Activated CD4-positive, alpha-beta memory T cell treated with anti-CD3 and anti-CD28 coated beads for 36 hours (primary cell): ENCODE measurements at regions of chr17 and their contacts with region 1.

Region 1: GRCh38 chr17:47970704-47971463 is at the start of gene CDK5RAP3:
- DNase-seq: peak; percentile 100
- H3K4me3 Mint-ChIP-seq: peak within 1 kb of the TSS; percentile 88
- H3K27ac Mint-ChIP-seq: peak within 1 kb of the TSS; percentile 85
- H3K4me1 Mint-ChIP-seq: peaks cover 22% of the 10 kb centered on the region
- H3K27me3 Mint-ChIP-seq: no peaks in the 10 kb centered on the region
- total RNA-seq, gene CDK5RAP3: 170 to 183 TPM

Region 2: DNA sequence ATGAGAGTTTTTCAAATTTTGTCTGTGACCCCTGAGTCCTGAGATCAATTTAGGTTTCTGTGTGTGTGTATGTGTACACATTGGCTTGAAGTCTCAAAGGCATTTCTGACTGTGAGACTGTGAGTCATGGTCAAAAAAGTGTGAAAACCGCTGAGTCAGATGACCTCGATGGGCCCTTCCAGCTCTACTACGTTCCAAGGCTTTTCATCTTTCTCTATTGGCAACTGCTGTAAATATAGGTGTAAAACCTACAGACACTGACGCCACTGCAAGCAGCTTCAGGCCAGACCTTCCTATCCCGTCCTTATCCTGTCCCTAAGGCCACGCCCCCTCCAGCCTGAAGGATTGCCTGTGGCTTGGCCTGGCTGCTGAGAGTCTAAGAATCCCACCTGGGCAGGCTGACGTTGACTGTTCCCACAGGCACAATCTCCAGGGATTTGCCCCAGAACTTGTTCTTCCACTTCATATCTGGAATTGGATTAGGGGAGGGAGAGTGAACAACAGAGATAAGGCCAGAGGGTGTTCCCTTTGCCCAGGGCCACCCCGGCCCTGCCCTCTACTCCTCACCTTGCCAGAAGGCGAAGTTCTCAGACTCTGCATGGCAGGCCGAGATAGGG is 160.6 kb before region 1 on chr17:
- CTCF ChIA-PET with region 1: no interaction called
- POLR2A ChIA-PET with region 1: no interaction called
- intact Hi-C with region 1: no loop called
- DNase-seq: peak; percentile 74
- H3K4me3 Mint-ChIP-seq: no peak overlapping the region
- H3K27ac Mint-ChIP-seq: peak overlapping the region; percentile 62
- H3K4me1 Mint-ChIP-seq: peaks cover 9% of the 10 kb centered on the region
- H3K27me3 Mint-ChIP-seq: no peaks in the 10 kb centered on the region

Region 3: DNA sequence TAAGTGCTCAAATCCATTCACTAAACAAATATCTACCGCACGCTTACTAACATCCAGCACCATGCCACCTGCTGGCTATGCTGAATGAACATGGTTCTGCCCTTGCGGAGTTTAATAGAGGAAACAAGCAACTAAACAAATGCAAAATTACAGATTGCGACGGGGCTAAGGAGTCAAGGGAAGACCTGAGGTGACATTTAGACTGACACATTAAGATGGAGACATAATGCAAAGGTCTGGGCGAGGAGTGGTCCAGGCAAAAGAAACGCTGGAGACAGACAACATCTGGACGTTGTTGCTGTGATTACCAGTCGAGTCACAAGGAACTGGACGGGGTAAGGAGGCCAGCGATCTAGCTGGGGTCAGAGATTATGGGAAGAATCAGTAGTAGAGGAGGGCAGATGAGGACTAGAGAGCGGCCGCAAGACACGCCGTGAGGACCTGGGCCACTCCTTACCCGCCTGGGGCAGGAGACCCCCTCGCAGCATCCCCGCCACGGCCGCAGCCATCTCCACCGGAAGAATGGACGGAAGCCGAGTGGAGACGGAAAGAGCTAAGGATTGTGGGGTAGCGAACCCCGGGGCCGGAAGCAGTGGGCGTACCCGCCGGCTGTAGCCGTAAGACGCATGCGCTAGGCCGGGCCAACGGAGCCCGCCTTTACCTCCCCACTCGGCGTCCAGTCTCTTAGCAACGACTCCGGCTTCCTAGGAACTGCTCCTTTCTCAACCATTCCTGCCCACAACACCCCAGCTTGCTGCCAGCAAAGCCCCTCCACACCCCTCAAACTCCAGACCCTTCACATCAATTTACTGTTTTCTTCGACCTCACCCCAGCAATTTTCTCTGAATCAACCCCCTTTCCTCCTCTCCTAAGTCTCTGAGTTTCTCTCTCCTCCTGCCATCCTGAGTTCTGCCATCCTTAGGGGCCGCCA is 139.6 kb before region 1 on chr17 and contains the starts of genes LRRC46 and MRPL10:
- CTCF ChIA-PET with region 1: interaction called, 11 read pairs
- POLR2A ChIA-PET with region 1: no interaction called
- intact Hi-C with region 1: no loop called
- DNase-seq: peak; percentile 96
- H3K4me3 Mint-ChIP-seq: peak within 1 kb of the TSS; percentile 85
- H3K27ac Mint-ChIP-seq: peak within 1 kb of the TSS; percentile 81
- H3K4me1 Mint-ChIP-seq: peaks cover 50% of the 10 kb centered on the region
- H3K27me3 Mint-ChIP-seq: no peaks in the 10 kb centered on the region
- total RNA-seq, gene LRRC46: 0.29 to 0.59 TPM
- total RNA-seq, gene MRPL10: 69.9 to 72.4 TPM

Region 4: GRCh38 chr17:47895856-47896671 is 74.8 kb before region 1 on chr17 and contains the start of gene SP2:
- CTCF ChIA-PET with region 1: interaction called, 15 read pairs
- POLR2A ChIA-PET with region 1: interaction called, 14 read pairs
- intact Hi-C with region 1: loop called (anchors 1 kb)
- DNase-seq: peak; percentile 100
- H3K4me3 Mint-ChIP-seq: peak within 1 kb of the TSS; percentile 95
- H3K27ac Mint-ChIP-seq: peak within 1 kb of the TSS; percentile 87
- H3K4me1 Mint-ChIP-seq: peaks cover 34% of the 10 kb centered on the region
- H3K27me3 Mint-ChIP-seq: no peaks in the 10 kb centered on the region
- total RNA-seq, gene SP2: 15.1 to 17.2 TPM

Region 5: DNA sequence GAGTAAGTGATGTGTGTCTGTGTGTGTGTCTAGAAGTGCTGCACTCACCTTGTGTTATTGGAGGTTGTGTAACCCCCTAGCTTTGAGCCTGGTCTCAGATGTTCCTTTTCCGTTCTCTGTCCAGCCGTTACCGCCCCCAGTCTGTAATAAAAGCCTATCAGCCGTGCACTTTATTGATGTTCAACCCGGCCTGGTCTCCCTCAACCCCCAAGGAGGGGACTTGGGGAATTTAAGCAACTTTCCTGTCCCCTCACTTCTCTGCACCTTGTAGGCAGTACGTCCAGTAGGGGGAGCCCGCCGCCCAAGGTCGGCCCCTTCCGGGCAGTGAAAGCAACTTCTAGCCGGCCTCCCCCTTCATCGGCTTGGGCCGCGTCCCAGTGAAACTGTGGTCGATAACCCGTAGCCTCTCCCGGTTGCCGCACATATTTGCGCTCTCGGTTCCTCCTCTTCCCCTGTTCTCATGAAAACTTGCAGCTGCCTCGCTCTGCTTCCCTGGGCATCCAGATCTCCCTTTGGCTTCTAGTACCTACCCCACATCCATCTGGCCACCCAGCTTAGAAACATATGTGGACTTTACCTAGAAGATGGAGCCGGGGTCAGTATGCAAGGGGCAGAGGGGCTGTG is 21.6 kb before region 1 on chr17:
- CTCF ChIA-PET with region 1: interaction called, 290 read pairs
- POLR2A ChIA-PET with region 1: interaction called, 7 read pairs
- intact Hi-C with region 1: loop called (anchors 1 kb)
- DNase-seq: peak; percentile 87
- H3K4me3 Mint-ChIP-seq: peak overlapping the region; percentile 51
- H3K27ac Mint-ChIP-seq: peak overlapping the region; percentile 63
- H3K4me1 Mint-ChIP-seq: peaks cover 28% of the 10 kb centered on the region
- H3K27me3 Mint-ChIP-seq: no peaks in the 10 kb centered on the region

Region 6: DNA sequence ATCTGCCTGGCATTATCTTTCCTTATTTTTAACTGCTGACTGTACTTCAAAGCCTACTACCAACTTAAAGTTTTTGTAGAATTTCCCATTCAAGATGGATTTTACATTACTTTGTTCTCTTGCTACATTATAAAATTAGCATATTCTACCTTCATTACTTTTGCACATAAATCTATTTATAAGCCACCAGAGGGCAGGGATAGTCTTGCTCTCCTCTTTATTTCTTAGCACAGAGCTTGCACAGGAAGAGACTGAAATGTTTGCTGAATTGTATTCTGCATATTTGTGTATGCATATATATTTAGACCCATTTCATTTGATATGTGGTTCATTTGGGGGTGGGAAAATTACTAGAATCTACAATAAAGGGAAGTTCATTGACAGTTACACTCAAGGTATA is 351.2 kb after region 1 on chr17:
- CTCF ChIA-PET with region 1: no interaction called
- POLR2A ChIA-PET with region 1: no interaction called
- intact Hi-C with region 1: no loop called
- DNase-seq: no peak
- H3K4me3 Mint-ChIP-seq: no peak overlapping the region
- H3K27ac Mint-ChIP-seq: no peak overlapping the region
- H3K4me1 Mint-ChIP-seq: peaks cover 6% of the 10 kb centered on the region
- H3K27me3 Mint-ChIP-seq: no peaks in the 10 kb centered on the region

Region 7: DNA sequence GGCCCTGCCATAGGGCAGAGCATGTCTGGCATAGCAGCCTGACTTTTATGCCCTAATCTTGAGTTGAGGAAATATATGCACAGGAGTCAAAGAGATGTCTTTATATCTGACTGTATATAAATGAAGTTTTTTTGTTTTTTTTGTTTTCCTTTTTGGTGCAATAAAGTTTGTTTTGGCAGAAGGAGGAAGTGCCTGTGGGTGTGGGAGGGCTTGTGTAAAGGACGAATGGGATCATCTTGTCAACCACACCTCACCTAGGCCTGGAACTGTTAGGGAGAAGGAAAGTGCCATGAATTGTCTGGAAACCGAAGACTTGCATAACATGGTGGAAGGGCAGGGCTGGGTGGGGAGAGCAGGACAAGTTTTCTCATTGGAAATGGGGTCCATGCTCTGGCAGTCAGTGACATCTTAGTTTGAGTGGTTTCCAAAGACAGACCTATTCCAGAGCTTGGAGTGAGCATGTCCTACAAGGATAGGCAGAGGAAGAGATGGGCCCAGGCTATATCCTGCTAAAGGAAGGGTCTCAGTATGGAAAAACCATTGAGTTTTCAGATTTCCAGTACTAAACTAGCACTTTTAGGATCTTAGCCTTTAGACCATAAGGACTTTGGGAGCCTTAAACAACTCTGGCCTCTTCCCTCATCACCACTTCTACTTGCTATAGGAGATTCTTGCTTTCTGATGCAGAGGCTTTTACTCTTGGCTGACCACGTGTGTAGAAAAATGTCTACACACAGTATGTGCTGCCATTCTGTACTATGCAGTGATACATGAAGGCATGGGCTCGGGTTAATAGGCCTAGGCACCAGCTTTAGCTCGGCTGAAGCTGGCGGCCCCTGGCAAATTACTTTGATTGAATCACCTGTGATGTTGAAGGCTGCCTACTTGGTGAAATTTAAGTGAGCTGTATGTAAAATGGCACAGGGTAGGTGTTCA is 958.3 kb after region 1 on chr17:
- CTCF ChIA-PET with region 1: no interaction called
- POLR2A ChIA-PET with region 1: no interaction called
- intact Hi-C with region 1: no loop called
- DNase-seq: no peak
- H3K4me3 Mint-ChIP-seq: no peak overlapping the region
- H3K27ac Mint-ChIP-seq: peak overlapping the region; percentile 14
- H3K4me1 Mint-ChIP-seq: peaks cover 11% of the 10 kb centered on the region
- H3K27me3 Mint-ChIP-seq: no peaks in the 10 kb centered on the region

Region 8: GRCh38 chr17:49456183-49456965 is 1485.5 kb after region 1 on chr17:
- CTCF ChIA-PET with region 1: no interaction called
- POLR2A ChIA-PET with region 1: no interaction called
- intact Hi-C with region 1: no loop called
- DNase-seq: no peak
- H3K4me3 Mint-ChIP-seq: no peak overlapping the region
- H3K27ac Mint-ChIP-seq: no peak overlapping the region
- H3K4me1 Mint-ChIP-seq: no peaks in the 10 kb centered on the region
- H3K27me3 Mint-ChIP-seq: peaks cover 33% of the 10 kb centered on the region